PC-9 (cell line): ENCODE measurements at regions of chr18 and their contacts with region 1.

Region 1: DNA sequence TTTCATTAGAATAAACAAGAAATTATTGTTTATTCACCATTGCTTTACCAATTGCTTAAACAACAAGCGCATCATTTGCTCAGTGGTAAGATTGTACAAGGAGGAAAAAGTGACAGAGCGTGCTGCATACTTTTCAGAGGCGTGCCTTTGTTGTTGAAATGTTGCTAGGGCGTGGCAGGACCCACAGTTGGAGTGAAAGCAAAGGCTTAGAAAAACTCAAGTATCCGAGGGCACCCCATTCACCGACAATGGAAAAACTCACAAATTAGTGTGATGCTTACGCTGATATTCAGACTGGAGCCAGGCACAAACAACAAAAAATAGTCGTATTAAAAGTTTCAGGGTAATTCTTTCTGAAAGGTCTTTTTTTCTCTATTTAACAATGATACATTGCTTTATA is 37.6 kb upstream of the RTTN start:
- DNase-seq: peak; percentile 65 to 89
- H3K4me3 ChIP-seq: peak overlapping the region; percentile 47
- H3K27ac ChIP-seq: peak overlapping the region; percentile 97
- H3K4me1 ChIP-seq: peaks cover 21% of the 10 kb centered on the region
- H3K27me3 ChIP-seq: no peaks in the 10 kb centered on the region
- CTCF ChIP-seq: no peak

Region 2: GRCh38 chr18:70205421-70206397 is 37.4 kb before region 1 on chr18 and contains the start of gene RTTN:
- CTCF ChIA-PET with region 1: no interaction called
- POLR2A ChIA-PET with region 1: no interaction called
- intact Hi-C with region 1: loop called (anchors 1 kb)
- DNase-seq: peak; percentile 84 to 91
- H3K4me3 ChIP-seq: peak within 1 kb of the TSS; percentile 99
- H3K27ac ChIP-seq: peak within 1 kb of the TSS; percentile 93
- H3K4me1 ChIP-seq: peaks cover 18% of the 10 kb centered on the region
- H3K27me3 ChIP-seq: no peaks in the 10 kb centered on the region
- CTCF ChIP-seq: no peak
- total RNA-seq, gene RTTN: 14.3 and 16.8 TPM in 2 replicates

Region 3: GRCh38 chr18:70276416-70277191 is 33.5 kb after region 1 on chr18:
- CTCF ChIA-PET with region 1: no interaction called
- POLR2A ChIA-PET with region 1: no interaction called
- intact Hi-C with region 1: loop called (anchors 1 kb)
- DNase-seq: peak; percentile 68 to 92
- H3K4me3 ChIP-seq: no peak overlapping the region
- H3K27ac ChIP-seq: peak overlapping the region; percentile 85
- H3K4me1 ChIP-seq: peaks cover 32% of the 10 kb centered on the region
- H3K27me3 ChIP-seq: no peaks in the 10 kb centered on the region
- CTCF ChIP-seq: no peak

Region 4: DNA sequence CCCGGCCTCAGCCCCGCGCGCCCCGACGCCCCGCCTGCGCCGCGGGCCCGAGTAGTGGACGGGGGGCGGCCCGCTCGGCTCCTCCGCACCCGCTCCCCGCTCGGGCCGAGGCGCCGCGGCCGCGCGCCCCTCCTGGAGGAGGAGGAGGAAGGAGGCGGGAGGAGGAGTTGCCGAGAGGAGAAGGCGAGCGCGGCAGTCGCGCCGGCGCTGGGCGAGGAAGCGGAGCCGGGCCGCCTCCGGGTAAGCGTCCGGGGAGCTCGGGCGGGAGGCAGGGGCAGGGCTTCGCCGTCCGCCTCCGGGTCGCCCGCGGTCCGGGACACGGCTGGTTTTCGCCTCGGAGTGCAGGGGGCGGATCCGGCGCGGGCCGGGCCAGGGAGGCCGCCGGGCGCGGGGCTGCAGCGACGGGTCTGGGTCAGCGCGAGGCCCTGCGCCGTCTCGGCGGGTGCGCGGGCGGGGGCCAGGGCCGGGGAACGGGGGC is 45.8 kb after region 1 on chr18 and contains the start of gene SOCS6:
- CTCF ChIA-PET with region 1: no interaction called
- POLR2A ChIA-PET with region 1: no interaction called
- intact Hi-C with region 1: loop called (anchors 2 kb)
- DNase-seq: peak; percentile 53 to 58
- H3K4me3 ChIP-seq: peak within 1 kb of the TSS; percentile 94
- H3K27ac ChIP-seq: peak within 1 kb of the TSS; percentile 61
- H3K4me1 ChIP-seq: peaks cover 45% of the 10 kb centered on the region
- H3K27me3 ChIP-seq: no peaks in the 10 kb centered on the region
- CTCF ChIP-seq: no peak
- total RNA-seq, gene SOCS6: 20.9 and 21.0 TPM in 2 replicates